A673 (cell line): ENCODE measurements at regions of chr6 and their contacts with region 1.

Region 1: DNA sequence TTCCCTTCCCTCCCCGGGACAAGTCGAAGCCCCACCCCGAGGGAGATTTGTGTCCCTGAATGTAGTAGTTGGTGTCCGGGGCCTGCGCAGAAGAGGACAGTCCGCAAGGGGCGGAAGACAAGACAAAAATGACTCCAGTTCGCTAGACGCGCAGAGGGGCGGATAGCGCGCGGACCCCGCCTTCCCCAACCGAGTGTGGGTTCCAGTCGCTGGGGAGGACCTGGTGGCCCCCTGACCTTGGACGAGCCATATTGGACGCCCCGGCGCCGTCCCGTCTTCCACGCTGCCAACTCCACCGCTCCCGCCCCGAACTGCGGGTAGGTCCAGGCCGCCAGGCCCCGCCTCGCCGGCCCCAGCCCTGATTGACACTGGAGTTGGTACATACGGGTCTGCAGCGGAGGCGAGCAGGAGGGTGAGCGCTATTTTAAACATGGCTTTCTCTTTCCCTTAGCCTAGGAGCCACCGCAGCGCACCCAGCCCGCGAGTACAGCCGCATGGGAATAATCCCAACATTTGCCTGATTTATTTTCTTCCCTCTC is 802 bp downstream of the HMGN3 start:
- DNase-seq: peak; percentile 88
- H3K4me3 ChIP-seq: peak overlapping the region; percentile 82
- H3K27ac ChIP-seq: peak overlapping the region; percentile 79
- H3K4me1 ChIP-seq: peaks cover 11% of the 10 kb centered on the region
- H3K27me3 ChIP-seq: no peaks in the 10 kb centered on the region
- CTCF ChIP-seq: peak; percentile 37; the same call in 1 of the 2 replicates

Region 2: GRCh38 chr6:79078075-79079025 is 155.3 kb before region 1 on chr6 and contains the start of gene PHIP:
- CTCF ChIA-PET with region 1: no interaction called
- POLR2A ChIA-PET with region 1: no interaction called
- intact Hi-C with region 1: loop called (anchors 1 kb)
- DNase-seq: peak; percentile 96
- H3K4me3 ChIP-seq: peak within 1 kb of the TSS; percentile 81
- H3K27ac ChIP-seq: peak within 1 kb of the TSS; percentile 98
- H3K4me1 ChIP-seq: peaks cover 30% of the 10 kb centered on the region
- H3K27me3 ChIP-seq: no peaks in the 10 kb centered on the region
- CTCF ChIP-seq: no peak
- total RNA-seq, gene PHIP: 42.5 and 45.1 TPM in 2 replicates

Region 3: DNA sequence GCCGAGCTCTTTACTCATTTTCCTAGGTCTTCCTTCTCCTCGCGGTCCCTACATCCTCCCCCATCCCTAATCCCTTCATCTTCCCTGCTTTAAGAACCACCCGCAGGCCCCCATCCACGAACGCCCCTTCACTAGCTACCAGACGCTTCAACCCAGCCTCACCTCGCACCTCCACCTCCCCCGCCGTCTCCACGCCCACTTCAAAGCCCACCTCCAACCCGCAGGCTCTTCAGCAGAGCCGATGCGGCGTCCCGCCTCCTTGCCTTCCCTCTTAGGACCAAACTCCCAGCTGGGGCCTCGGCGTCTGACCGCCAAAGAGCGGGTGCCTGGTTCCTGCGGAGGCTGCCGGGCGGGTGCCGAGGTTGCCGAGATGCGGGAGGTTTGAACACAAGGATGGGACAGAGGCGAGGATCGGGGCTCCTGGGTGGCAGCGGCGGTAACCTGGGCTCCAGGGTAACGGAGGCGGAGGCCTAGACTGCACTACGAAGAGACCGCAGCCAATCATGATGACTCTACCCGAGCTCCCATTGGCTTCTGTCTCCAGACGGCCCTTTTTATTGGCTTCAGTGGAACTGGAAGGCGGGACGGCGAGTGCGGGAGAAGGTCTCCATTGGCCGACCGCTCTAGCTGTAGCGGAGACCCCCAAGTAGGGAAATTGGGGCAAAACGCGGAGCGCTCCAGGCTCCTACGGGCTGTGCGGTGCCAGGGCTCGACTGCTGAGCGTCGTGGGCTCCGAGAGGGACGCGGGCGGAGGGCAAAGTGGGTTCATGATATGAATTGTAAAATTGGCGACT is 303.5 kb after region 1 on chr6 and contains the start of gene LCA5:
- CTCF ChIA-PET with region 1: no interaction called
- POLR2A ChIA-PET with region 1: no interaction called
- intact Hi-C with region 1: loop called (anchors 5 kb)
- DNase-seq: peak; percentile 99
- H3K4me3 ChIP-seq: peak within 1 kb of the TSS; percentile 77
- H3K27ac ChIP-seq: peak within 1 kb of the TSS; percentile 50
- H3K4me1 ChIP-seq: peaks cover 21% of the 10 kb centered on the region
- H3K27me3 ChIP-seq: no peaks in the 10 kb centered on the region
- CTCF ChIP-seq: no peak
- total RNA-seq, gene LCA5: 3.5 and 4.0 TPM in 2 replicates

Region 4: GRCh38 chr6:80020381-80021120 is 786.9 kb after region 1 on chr6:
- CTCF ChIA-PET with region 1: no interaction called
- POLR2A ChIA-PET with region 1: no interaction called
- intact Hi-C with region 1: no loop called
- DNase-seq: no peak
- H3K4me3 ChIP-seq: no peak overlapping the region
- H3K27ac ChIP-seq: no peak overlapping the region
- H3K4me1 ChIP-seq: no peaks in the 10 kb centered on the region
- H3K27me3 ChIP-seq: no peaks in the 10 kb centered on the region
- CTCF ChIP-seq: no peak